OCI-LY7 (cell line): ENCODE measurements at regions of chr4 and their contacts with region 1.

Region 1: GRCh38 chr4:88275516-88275915 is 8.8 kb downstream of the PPM1K start:
- DNase-seq: peak; percentile 69
- H3K4me3 ChIP-seq: peak overlapping the region; percentile 61
- H3K27ac ChIP-seq: peak overlapping the region; percentile 91
- H3K4me1 ChIP-seq: peaks cover 65% of the 10 kb centered on the region
- CTCF ChIP-seq: no peak

Region 2: DNA sequence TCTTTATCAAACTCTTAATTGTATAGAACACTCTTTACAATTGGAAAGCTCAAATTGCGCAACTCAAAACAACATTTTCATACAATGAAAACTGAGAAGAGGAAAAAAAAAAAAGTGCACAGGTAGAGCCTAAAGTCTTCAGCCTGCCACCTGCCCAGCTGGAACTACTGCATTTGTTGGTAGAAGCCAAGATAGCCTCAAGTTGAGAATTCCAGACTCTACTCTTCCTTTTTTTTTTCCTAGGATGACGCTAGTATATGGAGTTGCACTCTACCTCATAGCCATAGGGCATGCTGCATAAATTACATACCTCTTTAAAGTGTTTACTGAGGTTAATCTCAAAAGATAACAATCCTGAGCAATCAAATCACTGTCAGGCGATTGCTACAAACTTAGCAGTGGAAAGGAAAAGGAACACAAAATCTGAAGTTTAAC is 130.6 kb before region 1 on chr4:
- CTCF ChIA-PET with region 1: no interaction called
- POLR2A ChIA-PET with region 1: no interaction called
- intact Hi-C with region 1: no loop called
- DNase-seq: no peak
- H3K4me3 ChIP-seq: no peak overlapping the region
- H3K27ac ChIP-seq: no peak overlapping the region
- H3K4me1 ChIP-seq: no peaks in the 10 kb centered on the region
- CTCF ChIP-seq: no peak

Region 3: DNA sequence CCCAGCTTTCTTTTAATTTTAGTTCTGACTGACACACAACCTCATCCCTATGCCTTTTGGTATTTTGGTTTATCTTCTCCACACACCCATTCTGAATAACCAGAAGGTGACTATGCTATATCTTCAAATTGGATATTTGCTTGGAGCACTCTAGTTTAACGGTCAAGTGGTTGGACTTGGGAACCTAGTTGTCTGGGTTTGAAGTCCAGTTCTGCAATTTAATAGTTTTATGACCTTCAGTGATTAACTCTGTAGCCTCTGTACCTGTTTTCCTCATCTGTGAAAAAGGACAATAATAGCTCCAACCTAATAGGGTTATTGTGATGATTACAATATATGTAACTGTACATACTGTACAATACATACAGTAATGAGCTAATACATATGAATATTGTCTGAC is 11.2 kb before region 1 on chr4:
- CTCF ChIA-PET with region 1: interaction called, 3 read pairs
- POLR2A ChIA-PET with region 1: interaction called, 14 read pairs
- intact Hi-C with region 1: no loop called
- DNase-seq: no peak
- H3K4me3 ChIP-seq: no peak overlapping the region
- H3K27ac ChIP-seq: no peak overlapping the region
- H3K4me1 ChIP-seq: no peaks in the 10 kb centered on the region
- CTCF ChIP-seq: no peak